Esophagus squamous epithelium (tissue), 5 donors: ENCODE measurements at regions of chr22 and their contacts with region 1.

Region 1: GRCh38 chr22:40641269-40641668 is 4.8 kb upstream of the MRTFA start:
- DNase-seq: no peak
- H3K4me3 ChIP-seq: no peak overlapping the region
- H3K27ac ChIP-seq: no peak overlapping the region
- H3K4me1 ChIP-seq: peaks cover 3 to 33% (median 15%) of the 10 kb centered on the region in 3 donors
- H3K27me3 ChIP-seq: no peaks in the 10 kb centered on the region
- CTCF ChIP-seq: no peak
- POLR2A ChIP-seq: no peak

Region 2: DNA sequence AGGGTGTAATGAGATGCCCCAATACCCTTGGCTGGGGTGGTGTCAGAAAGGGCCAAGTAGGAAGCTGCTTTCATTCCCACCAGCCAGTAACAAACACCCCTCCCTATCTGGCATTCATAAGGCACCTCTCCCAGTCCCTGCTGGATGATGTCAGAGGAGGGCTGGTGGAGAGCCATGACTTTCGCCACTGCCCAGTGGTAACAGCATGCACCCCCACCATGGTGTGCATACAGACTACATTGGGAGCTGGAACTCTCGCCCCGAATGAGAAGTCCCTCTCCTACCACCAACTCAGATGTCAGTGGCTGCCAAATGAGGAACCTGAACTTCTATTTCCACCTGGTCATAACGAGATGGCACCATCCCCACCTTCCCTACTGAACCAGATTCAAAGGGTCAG is 197.5 kb before region 1 on chr22:
- intact Hi-C with region 1: loop called (anchors 5 kb)
- DNase-seq: no peak
- H3K4me3 ChIP-seq: no peak overlapping the region
- H3K27ac ChIP-seq: no peak overlapping the region
- H3K4me1 ChIP-seq: peaks cover 0 to 46% (median 18%) of the 10 kb centered on the region in 3 donors
- H3K27me3 ChIP-seq: no peaks in the 10 kb centered on the region
- CTCF ChIP-seq: no peak
- POLR2A ChIP-seq: no peak

Region 3: GRCh38 chr22:40525249-40525884 is 115.9 kb before region 1 on chr22:
- intact Hi-C with region 1: loop called (anchors 10 kb)
- DNase-seq: no peak
- H3K4me3 ChIP-seq: no peak overlapping the region
- H3K27ac ChIP-seq: no peak overlapping the region
- H3K4me1 ChIP-seq: peaks cover 4 to 23% (median 12%) of the 10 kb centered on the region in 3 donors
- H3K27me3 ChIP-seq: no peaks in the 10 kb centered on the region
- CTCF ChIP-seq: peak; percentile 53 to 74 (median 72)
- POLR2A ChIP-seq: no peak

Region 4: DNA sequence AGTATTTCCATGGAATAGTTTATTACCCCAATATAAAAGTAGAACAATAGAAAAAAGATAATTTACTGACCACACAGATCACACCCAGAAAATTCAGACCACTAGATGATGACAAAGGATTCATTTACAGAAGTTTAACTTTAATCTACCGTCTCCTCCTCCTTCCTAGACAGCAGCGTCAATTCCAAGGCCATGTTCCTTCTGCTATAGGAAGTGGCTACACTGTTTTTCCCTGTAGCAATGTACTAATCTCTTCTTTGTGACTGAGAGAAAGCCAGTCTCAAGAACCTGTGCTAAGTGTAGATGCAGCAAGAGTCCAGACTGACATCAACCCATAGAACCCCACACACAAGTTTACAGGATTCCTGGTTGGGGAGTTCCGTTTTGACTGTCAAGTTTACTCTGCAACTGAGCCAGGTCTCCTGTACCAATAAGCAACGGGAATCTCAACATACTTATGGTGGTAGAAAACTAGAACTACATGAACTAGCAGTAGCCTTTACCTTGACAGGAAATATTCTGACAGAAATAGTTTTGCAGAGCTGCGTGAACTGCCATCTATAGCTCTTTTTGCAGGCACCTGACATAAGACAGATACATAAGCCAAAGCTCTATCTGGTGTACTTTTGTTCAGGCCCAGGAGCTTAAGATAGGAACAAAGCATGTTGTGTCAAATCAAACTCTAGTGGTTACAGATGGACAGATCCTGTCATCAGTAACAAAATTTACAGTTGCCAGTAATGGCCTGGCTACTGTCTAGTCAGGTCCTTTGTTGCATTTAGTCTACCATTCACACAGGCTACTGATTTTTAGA is 47.6 kb before region 1 on chr22:
- intact Hi-C with region 1: no loop called
- DNase-seq: no peak
- H3K4me3 ChIP-seq: no peak overlapping the region
- H3K27ac ChIP-seq: no peak overlapping the region
- H3K4me1 ChIP-seq: peaks cover 10 to 65% (median 29%) of the 10 kb centered on the region in 3 donors
- H3K27me3 ChIP-seq: no peaks in the 10 kb centered on the region
- CTCF ChIP-seq: no peak
- POLR2A ChIP-seq: no peak

Region 5: DNA sequence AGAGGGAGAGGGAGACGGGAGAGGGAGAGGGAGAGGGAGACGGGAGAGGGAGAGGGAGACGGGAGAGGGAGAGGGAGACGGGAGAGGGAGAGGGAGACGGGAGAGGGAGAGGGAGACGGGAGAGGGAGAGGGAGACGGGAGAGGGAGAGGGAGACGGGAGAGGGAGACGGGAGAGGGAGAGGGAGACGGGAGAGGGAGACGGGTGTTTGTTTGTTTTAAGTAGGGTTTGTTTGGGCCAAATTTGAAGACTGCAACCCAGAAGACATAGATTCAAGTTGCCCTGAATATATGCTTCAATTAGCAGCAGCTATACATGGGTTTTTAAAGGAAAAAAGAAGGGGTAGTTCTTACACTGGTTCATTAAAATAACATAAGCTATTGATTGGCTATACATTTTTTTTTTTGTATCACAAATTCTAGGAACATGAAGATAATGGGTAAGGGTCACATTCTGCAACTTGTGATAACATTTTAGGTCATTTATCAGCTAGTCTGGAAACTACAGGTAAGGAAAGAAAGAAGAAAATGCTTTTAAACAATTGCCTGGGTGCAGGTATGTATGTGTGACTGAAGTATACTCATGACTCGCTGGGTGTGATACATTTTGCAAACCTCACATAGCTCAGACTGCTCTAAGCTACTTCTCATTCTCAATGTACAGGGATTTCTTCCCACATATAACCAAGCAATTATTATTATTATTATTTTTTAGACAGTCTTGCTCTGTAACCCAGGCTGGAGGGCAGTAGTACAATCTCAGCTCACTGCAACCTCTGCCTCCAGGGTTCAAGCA is 105.4 kb after region 1 on chr22:
- intact Hi-C with region 1: no loop called
- DNase-seq: no peak
- H3K4me3 ChIP-seq: peak overlapping the region in 1 of 4 donors; percentile 23
- H3K27ac ChIP-seq: peak overlapping the region in 2 of 4 donors; percentile 39 to 57
- H3K4me1 ChIP-seq: peaks cover 0 to 24% (median 11%) of the 10 kb centered on the region in 3 donors
- H3K27me3 ChIP-seq: no peaks in the 10 kb centered on the region
- CTCF ChIP-seq: no peak
- POLR2A ChIP-seq: no peak